Kidney (tissue), 22 donors: ENCODE measurements at regions of chr13 and their contacts with region 1.

Region 1: DNA sequence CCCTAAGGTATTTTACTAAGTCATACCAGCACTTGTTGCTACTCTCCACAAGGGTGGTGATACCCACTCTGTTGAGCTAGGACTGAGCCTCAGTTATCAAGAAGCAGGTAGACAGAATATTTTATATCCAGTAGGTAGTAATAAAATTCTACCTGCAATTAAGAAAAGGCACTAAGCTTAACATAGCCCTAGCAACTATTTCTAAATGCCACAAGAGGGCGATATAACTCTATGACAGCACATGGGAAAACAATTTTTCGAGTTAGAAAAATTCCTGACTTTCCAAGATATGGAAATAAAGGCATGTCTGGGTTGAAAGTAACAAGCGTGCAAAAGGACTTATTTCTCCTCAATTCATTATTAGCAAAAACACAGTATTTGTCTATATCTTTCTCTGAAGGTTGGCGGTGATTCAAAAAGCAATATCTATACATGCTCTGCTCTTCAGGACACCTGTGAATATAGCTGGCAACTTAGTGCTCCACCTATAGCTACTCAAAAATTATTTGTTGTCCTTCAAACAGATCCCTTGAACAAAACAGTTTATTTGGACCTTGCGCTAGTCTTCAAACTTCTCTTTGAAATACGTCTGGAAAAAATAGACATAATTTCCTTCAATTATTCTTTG is 14.7 kb downstream of the CCDC169 start:
- DNase-seq: peak in 2 of 5 donors; percentile 52 to 62
- H3K4me3 ChIP-seq: no peak overlapping the region
- H3K27ac ChIP-seq: no peak overlapping the region
- H3K4me1 ChIP-seq: no peaks in the 10 kb centered on the region
- H3K27me3 ChIP-seq: no peaks in the 10 kb centered on the region
- CTCF ChIP-seq: peak; percentile 76

Region 2: GRCh38 chr13:35448465-35448864 is 834.5 kb before region 1 on chr13:
- intact Hi-C with region 1: no loop called
- DNase-seq: peak in 2 of 5 donors; percentile 70 to 76
- H3K4me3 ChIP-seq: no peak overlapping the region
- H3K27ac ChIP-seq: no peak overlapping the region
- H3K4me1 ChIP-seq: peaks cover 0 to 4% (median 0%) of the 10 kb centered on the region in 3 donors
- H3K27me3 ChIP-seq: no peaks in the 10 kb centered on the region
- CTCF ChIP-seq: no peak

Region 3: GRCh38 chr13:36736119-36736726 is 453.3 kb after region 1 on chr13:
- intact Hi-C with region 1: loop called (anchors 10 kb)
- DNase-seq: peak in 4 of 5 donors; percentile 43 to 80 (median 68)
- H3K4me3 ChIP-seq: no peak overlapping the region
- H3K27ac ChIP-seq: no peak overlapping the region
- H3K4me1 ChIP-seq: no peaks in the 10 kb centered on the region
- H3K27me3 ChIP-seq: no peaks in the 10 kb centered on the region
- CTCF ChIP-seq: peak; percentile 62